CD4-positive, alpha-beta T cell (primary cell): ENCODE measurements at regions of chr5 and their contacts with region 1.

Region 1: DNA sequence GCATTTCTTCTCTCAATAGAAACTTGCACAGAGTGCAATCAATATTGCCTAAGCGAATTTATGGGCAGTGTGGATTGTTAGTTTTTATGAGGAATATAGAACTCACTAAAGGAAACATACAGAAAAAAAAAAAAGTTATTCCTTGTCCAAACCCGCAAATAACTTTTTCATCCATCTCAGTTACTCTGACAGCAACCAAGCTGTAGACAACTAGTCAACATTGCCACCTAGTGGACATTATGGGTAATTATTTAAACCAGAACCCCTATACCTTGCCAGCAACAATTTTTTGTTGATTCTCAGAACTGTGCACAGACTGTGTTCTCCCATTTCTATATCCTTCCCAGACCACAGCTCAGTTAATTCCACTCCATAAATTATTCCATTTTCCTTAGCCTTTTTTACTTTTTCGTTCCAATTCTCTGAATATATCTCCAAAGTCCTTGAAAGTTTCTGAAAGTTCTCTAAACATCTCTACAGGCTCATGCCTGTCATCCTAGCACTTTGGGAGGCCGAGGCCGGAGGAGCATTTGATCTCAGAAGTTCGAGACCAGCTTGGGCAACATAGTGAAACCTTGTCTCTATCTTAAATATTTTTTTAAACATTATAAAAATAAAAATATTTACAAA is 2.6 kb upstream of the AFAP1L1 start:
- DNase-seq: peak in 3 of 14 experiments; percentile 57 to 68 (median 68)
- ATAC-seq: peak; percentile 48
- H3K4me3 ChIP-seq: no peak overlapping the region
- H3K4me3 Mint-ChIP-seq: peak overlapping the region; percentile 18
- H3K27ac ChIP-seq: no peak overlapping the region
- H3K27ac Mint-ChIP-seq: no peak overlapping the region
- H3K4me1 ChIP-seq: peaks cover 20% of the 10 kb centered on the region
- H3K4me1 Mint-ChIP-seq: peaks cover 20% of the 10 kb centered on the region
- H3K27me3 ChIP-seq: peaks cover 14 to 24% of the 10 kb centered on the region in 2 experiments
- H3K27me3 Mint-ChIP-seq: peaks cover 29% of the 10 kb centered on the region
- CTCF ChIP-seq: peak; percentile 89

Region 2: GRCh38 chr5:148820461-148821395 is 448.3 kb before region 1 on chr5:
- CTCF ChIA-PET with region 1: no interaction called
- POLR2A ChIA-PET with region 1: no interaction called
- intact Hi-C with region 1: loop called (anchors 5 to 10 kb)
- DNase-seq: peak in 4 of 14 experiments; percentile 42 to 70 (median 58)
- ATAC-seq: no peak
- H3K4me3 ChIP-seq: no peak overlapping the region
- H3K4me3 Mint-ChIP-seq: no peak overlapping the region
- H3K27ac ChIP-seq: no peak overlapping the region
- H3K27ac Mint-ChIP-seq: no peak overlapping the region
- H3K4me1 ChIP-seq: peaks cover 3% of the 10 kb centered on the region
- H3K4me1 Mint-ChIP-seq: peaks cover 5% of the 10 kb centered on the region
- H3K27me3 ChIP-seq: peaks cover 0 to 4% of the 10 kb centered on the region in 2 experiments
- H3K27me3 Mint-ChIP-seq: peaks cover 5% of the 10 kb centered on the region
- CTCF ChIP-seq: peak; percentile 60

Region 3: DNA sequence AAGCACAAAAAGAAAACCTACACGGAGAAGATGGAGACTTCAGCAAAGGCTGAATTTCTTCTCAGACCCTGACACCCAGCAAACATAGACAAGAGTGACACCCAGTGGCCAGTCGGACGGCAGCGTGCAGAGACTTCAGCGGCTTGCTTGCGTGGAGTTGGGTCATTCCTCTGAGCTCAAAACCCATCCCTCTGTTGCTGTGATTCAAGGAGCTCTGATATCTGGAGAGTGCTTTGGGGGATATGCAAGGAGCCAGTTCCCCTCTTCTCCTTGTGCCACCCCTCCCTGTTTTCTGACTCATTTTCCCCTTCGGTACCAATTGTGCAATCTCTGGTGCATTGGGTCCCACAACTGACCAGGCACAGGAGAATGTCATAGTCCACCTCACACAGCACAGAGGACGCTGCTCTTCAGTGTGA is 233.7 kb before region 1 on chr5:
- CTCF ChIA-PET with region 1: no interaction called
- POLR2A ChIA-PET with region 1: no interaction called
- intact Hi-C with region 1: loop called in 1 of 2 experiments (anchors 5 kb)
- DNase-seq: peak; percentile 47 to 78 (median 57)
- ATAC-seq: peak; percentile 74
- H3K4me3 ChIP-seq: no peak overlapping the region
- H3K4me3 Mint-ChIP-seq: no peak overlapping the region
- H3K27ac ChIP-seq: no peak overlapping the region
- H3K27ac Mint-ChIP-seq: no peak overlapping the region
- H3K4me1 ChIP-seq: peaks cover 6% of the 10 kb centered on the region
- H3K4me1 Mint-ChIP-seq: peaks cover 25% of the 10 kb centered on the region
- H3K27me3 ChIP-seq: no peaks in the 10 kb centered on the region
- H3K27me3 Mint-ChIP-seq: peaks cover 5% of the 10 kb centered on the region
- CTCF ChIP-seq: peak; percentile 83

Region 4: DNA sequence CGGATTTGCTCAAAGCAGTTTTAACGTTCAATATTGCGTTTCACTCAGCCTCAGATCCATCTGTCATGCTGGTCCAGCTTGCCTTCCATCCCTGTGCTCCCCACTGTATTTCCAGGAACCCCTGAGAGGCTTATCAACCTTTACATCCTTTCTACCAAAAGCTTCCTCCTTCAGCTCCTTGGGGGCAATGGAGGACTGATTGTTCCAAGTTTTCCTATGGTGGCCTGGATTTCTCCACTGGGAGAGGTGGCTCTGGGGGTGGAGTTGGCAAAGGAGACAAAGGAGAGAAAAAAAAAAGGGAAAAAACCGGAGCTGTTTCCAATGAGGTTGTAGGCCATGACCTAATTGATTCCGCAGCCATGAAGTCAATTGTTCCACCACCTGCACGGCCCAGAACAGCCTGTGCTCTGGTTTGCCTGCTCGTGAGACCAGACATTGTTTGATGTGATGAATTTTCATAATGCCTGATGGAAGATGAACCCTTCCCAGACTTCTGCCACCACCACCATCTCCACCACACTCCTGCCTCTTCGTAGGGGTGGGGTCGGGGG is 73.6 kb before region 1 on chr5:
- CTCF ChIA-PET with region 1: no interaction called
- POLR2A ChIA-PET with region 1: no interaction called
- intact Hi-C with region 1: loop called in 1 of 2 experiments (anchors 10 kb)
- DNase-seq: no peak
- ATAC-seq: no peak
- H3K4me3 ChIP-seq: no peak overlapping the region
- H3K4me3 Mint-ChIP-seq: no peak overlapping the region
- H3K27ac ChIP-seq: no peak overlapping the region
- H3K27ac Mint-ChIP-seq: no peak overlapping the region
- H3K4me1 ChIP-seq: no peaks in the 10 kb centered on the region
- H3K4me1 Mint-ChIP-seq: no peaks in the 10 kb centered on the region
- H3K27me3 ChIP-seq: no peaks in the 10 kb centered on the region
- H3K27me3 Mint-ChIP-seq: no peaks in the 10 kb centered on the region
- CTCF ChIP-seq: no peak

Region 5: DNA sequence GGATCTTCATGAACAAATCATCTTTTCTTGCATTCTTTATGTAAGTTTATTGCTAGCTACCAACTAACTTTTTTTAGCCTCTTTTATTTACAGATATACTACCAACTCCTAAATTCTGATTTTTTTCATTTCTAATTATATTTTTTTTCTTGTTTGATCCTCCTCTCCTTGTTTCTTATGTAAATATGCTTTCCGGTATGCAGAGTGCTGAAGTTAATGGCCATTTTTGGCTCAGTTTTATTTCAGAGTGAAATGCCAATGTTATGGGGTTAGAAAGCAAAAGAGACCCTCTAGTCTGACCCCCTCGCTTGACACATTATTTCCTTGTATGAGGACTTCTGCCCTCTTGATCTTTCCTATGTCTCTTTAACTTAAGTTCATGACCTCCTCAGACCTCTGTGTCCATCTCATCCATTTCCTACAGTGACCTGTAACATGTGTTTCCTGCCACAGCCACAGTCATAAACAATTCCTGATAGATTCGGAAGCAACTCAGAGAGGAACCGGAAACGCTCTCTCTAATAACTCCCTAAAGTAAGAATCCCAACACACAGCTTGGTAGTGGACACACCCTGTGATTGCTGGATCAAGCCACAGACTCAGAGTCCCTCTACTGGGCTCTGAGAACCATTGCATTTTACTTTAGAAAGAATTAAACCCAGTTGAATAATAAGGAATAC is 40.3 kb before region 1 on chr5:
- CTCF ChIA-PET with region 1: no interaction called
- POLR2A ChIA-PET with region 1: no interaction called
- intact Hi-C with region 1: no loop called
- DNase-seq: no peak
- ATAC-seq: no peak
- H3K4me3 ChIP-seq: no peak overlapping the region
- H3K4me3 Mint-ChIP-seq: no peak overlapping the region
- H3K27ac ChIP-seq: no peak overlapping the region
- H3K27ac Mint-ChIP-seq: no peak overlapping the region
- H3K4me1 ChIP-seq: no peaks in the 10 kb centered on the region
- H3K4me1 Mint-ChIP-seq: no peaks in the 10 kb centered on the region
- H3K27me3 ChIP-seq: peaks cover 3 to 9% of the 10 kb centered on the region in 2 experiments
- H3K27me3 Mint-ChIP-seq: no peaks in the 10 kb centered on the region
- CTCF ChIP-seq: no peak